ENCODE measurements at regions of chr17 and their contacts with region 1.

Region 1: DNA sequence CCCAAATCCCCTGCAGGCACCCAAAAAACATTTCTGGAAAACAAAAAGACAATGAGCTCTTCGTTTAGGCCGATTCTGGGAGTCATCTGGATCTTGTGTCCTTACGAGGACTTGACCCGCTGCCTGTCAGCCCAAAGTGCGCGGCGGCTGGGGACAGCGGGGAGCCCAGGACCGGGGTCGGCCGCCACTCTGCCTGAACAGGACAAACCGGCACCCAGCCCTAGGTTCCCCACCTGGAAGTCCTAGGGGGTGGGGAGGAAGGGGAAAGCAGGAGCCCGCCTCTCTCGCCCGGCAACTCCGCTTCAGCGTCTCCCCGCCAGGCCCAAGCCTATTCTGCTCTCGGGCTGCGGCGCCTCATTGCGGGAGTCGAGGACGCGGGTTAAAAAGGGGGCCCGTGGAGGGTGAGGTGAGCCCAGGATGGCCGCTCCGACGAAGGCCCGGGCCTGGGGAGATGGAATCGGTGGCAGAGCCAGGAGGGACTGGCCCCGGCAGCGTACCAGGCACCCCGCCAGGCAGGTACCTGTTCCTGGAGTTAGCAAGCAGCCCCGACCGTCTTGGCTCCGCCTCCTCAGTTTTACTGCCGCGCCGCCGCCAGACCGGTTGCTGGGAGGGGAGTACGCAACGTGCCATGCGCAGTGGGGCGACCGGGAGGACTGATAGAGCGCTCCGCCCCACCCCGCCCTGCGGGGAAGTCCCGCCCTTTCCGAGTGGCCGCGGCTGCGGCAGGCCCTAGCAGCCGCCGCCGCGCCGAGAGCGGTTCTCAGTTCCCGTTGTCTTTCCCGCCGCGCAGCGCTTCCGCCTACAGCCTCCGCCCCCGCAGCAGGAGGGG is at the start of gene STRADA:
- DNase-seq: peak; percentile 99
- H3K4me3 Mint-ChIP-seq: peak within 1 kb of the TSS; percentile 90
- H3K27ac Mint-ChIP-seq: peak within 1 kb of the TSS; percentile 93
- H3K4me1 Mint-ChIP-seq: peaks cover 33% of the 10 kb centered on the region
- H3K27me3 Mint-ChIP-seq: no peaks in the 10 kb centered on the region
- total RNA-seq, gene STRADA: 53.1 to 59.4 TPM

Region 2: GRCh38 chr17:63707151-63707550 is 34.3 kb before region 1 on chr17:
- CTCF ChIA-PET with region 1: interaction called, 4 read pairs
- POLR2A ChIA-PET with region 1: interaction called, 110 read pairs
- DNase-seq: no peak
- H3K4me3 Mint-ChIP-seq: peak overlapping the region; percentile 13
- H3K27ac Mint-ChIP-seq: peak overlapping the region; percentile 69
- H3K4me1 Mint-ChIP-seq: peaks cover 73% of the 10 kb centered on the region
- H3K27me3 Mint-ChIP-seq: no peaks in the 10 kb centered on the region

Region 3: DNA sequence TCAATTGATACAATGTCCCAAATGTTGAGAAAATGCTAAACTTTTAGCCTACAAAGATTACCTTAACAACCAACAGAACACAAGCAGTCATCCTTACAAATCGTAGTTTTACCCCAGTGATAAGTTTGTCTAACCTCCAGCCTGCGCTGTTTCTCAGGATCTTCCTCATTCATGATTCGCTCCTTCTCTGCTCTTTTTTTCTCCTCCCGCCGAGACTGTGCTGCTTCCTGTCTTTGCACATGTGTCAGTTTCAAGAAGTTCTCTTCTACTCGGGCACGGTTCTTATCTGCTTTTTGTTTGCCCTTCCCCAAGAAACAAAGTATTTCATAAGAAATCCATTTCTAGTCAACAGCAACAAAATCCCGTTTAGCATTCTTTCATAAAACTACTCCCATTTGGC is 10.4 kb after region 1 on chr17:
- CTCF ChIA-PET with region 1: interaction called, 12 read pairs
- POLR2A ChIA-PET with region 1: interaction called, 12 read pairs
- DNase-seq: peak; percentile 33
- H3K4me3 Mint-ChIP-seq: peak overlapping the region; percentile 33
- H3K27ac Mint-ChIP-seq: peak overlapping the region; percentile 75
- H3K4me1 Mint-ChIP-seq: peaks cover 19% of the 10 kb centered on the region
- H3K27me3 Mint-ChIP-seq: no peaks in the 10 kb centered on the region